A549 (cell line): ENCODE measurements at regions of chrX and their contacts with region 1.

Region 1: GRCh38 chrX:15471016-15471415 is 22.1 kb downstream of the PIR start:
- DNase-seq: peak; percentile 19 to 70
- ATAC-seq: peak; percentile 86 to 97
- H3K4me3 ChIP-seq: no peak overlapping the region
- H3K27ac ChIP-seq: no peak overlapping the region
- H3K4me1 ChIP-seq: peaks cover 12% of the 10 kb centered on the region
- CTCF ChIP-seq: peak; percentile 71
- EP300 ChIP-seq: no peak
- POLR2A ChIP-seq: no peak
- RAD21 ChIP-seq: peak; percentile 55 to 63

Region 2: DNA sequence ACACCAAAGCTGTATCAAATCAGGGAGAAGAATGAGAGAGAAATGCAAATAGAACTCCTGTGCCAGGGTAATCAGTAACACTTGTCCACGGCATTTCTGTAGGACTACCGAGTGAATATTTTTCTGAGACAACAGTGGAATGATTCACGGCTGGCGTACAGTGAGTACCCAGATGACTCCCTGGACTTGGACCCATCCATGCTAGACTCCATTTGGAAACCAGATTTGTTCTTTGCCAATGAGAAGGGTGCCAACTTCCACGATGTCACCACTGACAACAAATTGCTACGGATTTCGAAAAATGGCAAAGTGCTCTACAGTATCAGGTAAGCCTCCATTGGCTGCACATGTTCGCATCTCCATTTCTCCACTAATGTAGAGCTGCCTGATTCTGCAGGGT is 889.9 kb before region 1 on chrX:
- CTCF ChIA-PET with region 1: no interaction called
- POLR2A ChIA-PET with region 1: no interaction called
- DNase-seq: no peak
- ATAC-seq: no peak
- H3K4me3 ChIP-seq: no peak overlapping the region
- H3K27ac ChIP-seq: no peak overlapping the region
- H3K4me1 ChIP-seq: no peaks in the 10 kb centered on the region
- CTCF ChIP-seq: no peak
- EP300 ChIP-seq: no peak
- POLR2A ChIP-seq: no peak
- RAD21 ChIP-seq: no peak

Region 3: GRCh38 chrX:15293451-15293850 is 177.6 kb before region 1 on chrX:
- CTCF ChIA-PET with region 1: no interaction called
- POLR2A ChIA-PET with region 1: no interaction called
- DNase-seq: no peak
- ATAC-seq: no peak
- H3K4me3 ChIP-seq: no peak overlapping the region
- H3K27ac ChIP-seq: no peak overlapping the region
- H3K4me1 ChIP-seq: peaks cover 18% of the 10 kb centered on the region; the same call in 2 of the 3 replicates
- CTCF ChIP-seq: no peak
- EP300 ChIP-seq: no peak
- POLR2A ChIP-seq: no peak
- RAD21 ChIP-seq: no peak

Region 4: DNA sequence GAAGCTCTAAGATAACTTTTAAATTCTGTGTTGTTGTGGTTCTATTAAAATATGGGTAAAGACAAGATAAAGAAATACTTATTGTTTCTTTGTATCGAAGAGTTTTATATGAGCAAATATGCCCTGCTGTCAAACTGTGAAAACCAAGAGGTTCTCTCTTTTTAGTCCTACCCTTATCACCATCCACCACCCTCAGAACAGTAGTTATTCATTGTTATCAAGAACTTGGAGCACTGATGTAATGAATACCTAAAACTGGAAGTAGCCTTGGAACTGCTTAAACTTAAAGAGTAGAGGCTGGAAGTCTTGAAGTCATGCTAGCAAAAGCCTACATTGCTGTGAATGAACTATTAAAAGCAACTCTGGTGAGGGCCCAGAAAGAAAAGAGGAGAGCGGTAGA is 12.9 kb after region 1 on chrX:
- CTCF ChIA-PET with region 1: interaction called, 10 read pairs
- POLR2A ChIA-PET with region 1: no interaction called
- DNase-seq: no peak
- ATAC-seq: no peak
- H3K4me3 ChIP-seq: no peak overlapping the region
- H3K27ac ChIP-seq: no peak overlapping the region
- H3K4me1 ChIP-seq: no peaks in the 10 kb centered on the region
- CTCF ChIP-seq: no peak
- EP300 ChIP-seq: no peak
- POLR2A ChIP-seq: no peak
- RAD21 ChIP-seq: no peak

Region 5: DNA sequence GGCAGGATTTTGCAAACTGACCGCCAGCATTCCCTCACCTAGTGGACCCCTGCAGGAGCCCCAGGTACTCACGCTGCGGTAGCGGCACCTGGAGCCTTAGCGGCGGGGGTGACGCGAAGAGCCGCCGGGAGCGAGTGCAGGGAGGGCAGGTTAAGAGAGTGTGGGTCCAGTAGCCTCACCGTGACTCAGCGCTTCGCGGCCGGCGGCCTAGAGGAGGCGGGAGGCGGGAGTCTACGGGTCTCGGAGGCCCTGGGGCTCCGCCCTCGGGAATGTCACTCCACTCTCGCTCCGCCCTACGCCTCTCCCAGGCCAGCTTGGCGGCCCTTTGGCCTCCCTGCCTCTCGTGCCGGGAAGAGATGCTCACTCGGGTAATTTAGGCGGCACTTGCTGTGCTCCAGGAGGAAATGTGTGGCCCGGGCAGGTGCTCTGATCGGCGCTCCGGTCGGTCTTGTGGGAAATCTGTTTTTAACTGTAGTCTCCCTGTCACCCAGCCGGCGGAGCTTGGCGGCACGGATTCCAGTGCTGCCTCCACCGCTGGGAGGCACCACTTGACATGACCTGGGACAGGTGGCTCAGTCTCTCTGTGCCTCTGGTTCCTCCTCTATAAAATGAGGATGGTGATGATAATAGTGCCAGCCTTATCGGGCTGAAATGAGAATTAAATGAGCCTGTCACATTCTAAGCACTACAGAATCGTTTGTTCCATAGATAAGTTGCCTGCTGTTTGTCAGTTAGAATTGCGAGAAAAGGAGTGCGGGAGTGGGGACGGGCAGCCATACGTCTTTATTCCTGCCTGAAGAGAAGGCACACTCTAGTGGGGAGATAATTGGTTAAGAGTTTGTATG is 22.3 kb after region 1 on chrX and contains the start of gene PIR:
- CTCF ChIA-PET with region 1: interaction called, 13 read pairs
- POLR2A ChIA-PET with region 1: interaction called, 3 read pairs
- DNase-seq: peak; percentile 82 to 91
- ATAC-seq: peak; percentile 99
- H3K4me3 ChIP-seq: peak within 1 kb of the TSS; percentile 68
- H3K27ac ChIP-seq: peak within 1 kb of the TSS; percentile 98 to 99
- H3K4me1 ChIP-seq: peaks cover 23% of the 10 kb centered on the region
- CTCF ChIP-seq: peak; percentile 52
- EP300 ChIP-seq: no peak
- POLR2A ChIP-seq: peak; percentile 77
- RAD21 ChIP-seq: no peak
- polyA plus RNA-seq, gene PIR: 99.8 and 120 TPM in 2 replicates